Activated CD4-positive, alpha-beta memory T cell treated with anti-CD3 and anti-CD28 coated beads, Interleukin-2, amount 10 ng/mL, durations not matched to agents 7 days and 5 days (primary cell): ENCODE measurements at regions of chr15 and their contacts with region 1.

Region 1: GRCh38 chr15:72722071-72722696 is 36.2 kb downstream of the BBS4 start:
- DNase-seq: peak; percentile 77
- H3K4me3 Mint-ChIP-seq: no peak overlapping the region
- H3K27ac Mint-ChIP-seq: no peak overlapping the region
- H3K4me1 Mint-ChIP-seq: peaks cover 1% of the 10 kb centered on the region
- H3K27me3 Mint-ChIP-seq: no peaks in the 10 kb centered on the region

Region 2: DNA sequence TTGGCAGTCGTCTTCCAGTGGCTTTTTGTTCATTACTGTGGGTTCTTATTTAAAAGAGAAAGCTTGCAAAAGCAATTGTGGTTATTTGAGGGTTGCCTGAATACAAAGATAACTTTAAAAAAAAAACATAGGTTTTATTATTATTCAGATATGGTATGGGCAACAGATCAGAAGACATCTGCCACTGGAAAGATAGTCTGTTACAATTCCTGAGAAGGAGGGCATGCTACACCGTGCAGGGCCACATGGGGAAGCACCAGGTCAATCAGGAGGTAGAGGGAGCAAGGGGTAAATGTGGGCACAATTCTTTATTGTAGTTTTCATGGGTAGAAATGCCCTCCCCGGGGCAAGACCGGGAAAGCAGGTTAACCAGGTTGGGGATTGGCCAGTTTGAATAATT is 10.3 kb after region 1 on chr15:
- CTCF ChIA-PET with region 1: interaction called, 39 read pairs
- POLR2A ChIA-PET with region 1: interaction called, 3 read pairs
- DNase-seq: no peak
- H3K4me3 Mint-ChIP-seq: no peak overlapping the region
- H3K27ac Mint-ChIP-seq: no peak overlapping the region
- H3K4me1 Mint-ChIP-seq: peaks cover 20% of the 10 kb centered on the region
- H3K27me3 Mint-ChIP-seq: no peaks in the 10 kb centered on the region

Region 3: GRCh38 chr15:72764656-72765055 is 42.5 kb after region 1 on chr15:
- CTCF ChIA-PET with region 1: interaction called, 13 read pairs
- POLR2A ChIA-PET with region 1: no interaction called
- DNase-seq: no peak
- H3K4me3 Mint-ChIP-seq: no peak overlapping the region
- H3K27ac Mint-ChIP-seq: no peak overlapping the region
- H3K4me1 Mint-ChIP-seq: peaks cover 34% of the 10 kb centered on the region
- H3K27me3 Mint-ChIP-seq: no peaks in the 10 kb centered on the region

Region 4: DNA sequence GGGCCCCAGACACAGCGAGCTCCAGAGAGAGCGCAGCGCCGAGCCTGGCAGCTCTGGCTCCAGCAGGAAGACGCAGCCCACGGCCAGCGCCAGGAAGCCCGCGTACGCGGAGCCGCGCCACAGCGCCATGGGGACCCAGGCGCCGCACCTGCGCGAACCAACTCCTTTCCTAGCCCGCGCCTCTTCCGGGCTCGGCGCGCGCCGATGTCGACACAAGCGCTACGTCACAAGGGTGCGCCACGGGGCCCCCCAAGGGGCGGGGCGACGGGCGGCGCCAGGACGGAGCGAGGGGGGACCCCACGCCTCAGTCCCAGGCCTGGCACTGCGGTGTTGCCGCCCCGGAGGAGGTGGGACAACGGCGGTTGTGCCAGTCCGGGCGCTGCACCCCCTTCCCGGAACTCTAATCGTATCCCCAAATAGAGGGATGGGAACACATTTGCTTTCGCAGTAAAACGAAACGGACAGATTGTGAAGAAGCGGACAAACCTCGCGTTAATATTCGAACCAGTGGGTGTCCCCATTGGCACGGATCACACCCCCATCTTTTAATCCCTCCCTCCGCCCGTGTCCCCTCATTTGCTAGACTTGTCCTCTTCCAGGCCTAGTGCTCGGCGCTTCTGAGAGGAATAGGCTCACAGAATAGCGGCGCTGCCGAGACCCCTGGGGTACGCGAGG is 61.5 kb after region 1 on chr15 and contains the start of gene ADPGK:
- CTCF ChIA-PET with region 1: interaction called, 11 read pairs
- POLR2A ChIA-PET with region 1: interaction called, 4 read pairs
- DNase-seq: peak; percentile 95
- H3K4me3 Mint-ChIP-seq: peak within 1 kb of the TSS; percentile 93
- H3K27ac Mint-ChIP-seq: peak within 1 kb of the TSS; percentile 98
- H3K4me1 Mint-ChIP-seq: peaks cover 76% of the 10 kb centered on the region
- H3K27me3 Mint-ChIP-seq: no peaks in the 10 kb centered on the region
- total RNA-seq, gene ADPGK: 83.6 to 84.7 TPM

Region 5: DNA sequence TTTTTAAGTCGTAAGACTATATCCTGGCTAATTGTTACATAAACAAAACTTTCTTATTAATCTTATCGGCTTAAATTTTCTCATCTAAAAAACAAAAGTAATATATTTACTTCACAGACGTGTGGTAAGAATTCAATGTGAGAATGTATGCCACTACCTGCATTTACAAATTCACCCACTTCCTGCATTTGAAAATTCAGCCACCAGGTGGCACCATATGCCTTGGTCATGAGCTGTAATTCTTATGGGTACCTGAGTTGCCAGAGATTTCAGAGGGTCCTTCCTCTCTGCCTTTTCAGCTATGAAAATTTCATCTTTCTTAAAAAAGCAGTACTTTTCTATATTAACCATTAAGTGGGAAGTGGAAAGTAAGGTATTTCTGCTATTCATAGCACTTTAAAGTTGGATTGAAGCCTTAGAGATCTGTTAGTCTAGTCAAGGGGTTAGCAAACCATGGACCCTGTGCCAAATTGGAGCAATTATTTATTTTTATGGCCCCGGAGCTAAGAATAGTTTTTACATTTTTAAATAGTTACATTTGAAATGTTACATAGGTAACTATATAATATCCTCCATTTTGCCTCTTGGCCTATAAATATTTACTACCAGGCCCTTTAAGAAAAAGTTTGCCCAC is 518.8 kb after region 1 on chr15:
- CTCF ChIA-PET with region 1: interaction called, 14 read pairs
- POLR2A ChIA-PET with region 1: no interaction called
- DNase-seq: peak; percentile 82
- H3K4me3 Mint-ChIP-seq: no peak overlapping the region
- H3K27ac Mint-ChIP-seq: no peak overlapping the region
- H3K4me1 Mint-ChIP-seq: peaks cover 19% of the 10 kb centered on the region
- H3K27me3 Mint-ChIP-seq: no peaks in the 10 kb centered on the region